ENCODE measurements at regions of chr5 and their contacts with region 1.

Region 1: DNA sequence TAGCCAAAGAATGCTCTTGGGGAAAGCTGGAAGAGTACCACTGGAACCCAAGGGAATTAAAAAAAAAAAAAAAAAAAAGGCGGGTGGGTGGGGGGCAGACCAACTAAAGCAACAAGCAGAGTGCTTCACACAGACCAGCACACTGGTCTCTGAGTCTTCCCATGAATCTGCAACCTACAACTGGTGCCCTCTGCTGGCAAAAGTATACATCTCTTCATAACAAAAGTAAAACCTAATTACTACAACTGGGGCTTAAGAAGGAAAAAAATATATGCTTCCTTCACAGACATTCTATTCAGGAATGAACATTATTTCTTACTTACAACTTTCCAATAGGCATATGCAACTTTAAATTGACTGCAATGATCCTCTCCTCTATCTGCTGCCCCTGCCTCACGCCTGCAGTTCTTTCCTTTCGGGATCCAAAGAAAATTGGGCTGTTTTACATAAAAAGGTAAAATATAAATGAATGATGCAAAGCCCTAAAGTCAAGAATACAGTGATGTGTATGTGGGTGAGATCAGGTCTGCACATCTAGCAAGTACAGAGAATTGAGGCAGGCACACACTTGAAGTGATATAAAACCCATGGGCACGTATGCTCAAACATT is 7.2 kb upstream of the KLHL3 start:
- DNase-seq: peak in 4 of 5 donors; percentile 37 to 66 (median 44)
- H3K4me3 ChIP-seq: no peak overlapping the region
- H3K27ac ChIP-seq: no peak overlapping the region
- H3K4me1 ChIP-seq: no peaks in the 10 kb centered on the region
- H3K27me3 ChIP-seq: no peaks in the 10 kb centered on the region
- CTCF ChIP-seq: peak; percentile 39 to 65 (median 48)
- EP300 ChIP-seq: no peak
- POLR2A ChIP-seq: no peak

Region 2: DNA sequence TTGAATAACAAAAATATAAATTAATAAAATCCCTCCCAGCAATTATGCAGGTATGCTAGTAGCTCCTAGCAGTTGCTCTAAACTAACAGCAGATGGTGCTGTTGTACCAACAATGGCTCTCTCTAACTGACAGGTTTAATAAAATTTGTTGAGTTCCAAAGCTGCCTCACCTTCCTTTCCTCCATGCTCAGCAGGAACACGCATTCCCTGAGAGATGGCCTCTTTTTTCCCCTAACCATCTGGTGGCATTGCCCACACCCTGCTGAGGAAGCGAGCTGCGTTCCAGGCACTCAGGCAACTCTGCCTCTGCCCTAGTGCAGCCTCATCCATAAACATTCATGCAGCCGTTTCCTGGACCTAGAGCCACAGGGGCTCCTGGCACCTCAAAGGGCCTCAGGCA is 113.5 kb before region 1 on chr5:
- intact Hi-C with region 1: loop called in 2 of 4 experiments (anchors 2 to 5 kb)
- DNase-seq: peak in 1 of 5 donors; percentile 33
- H3K4me3 ChIP-seq: no peak overlapping the region
- H3K27ac ChIP-seq: no peak overlapping the region
- H3K4me1 ChIP-seq: peaks cover 8% of the 10 kb centered on the region
- H3K27me3 ChIP-seq: no peaks in the 10 kb centered on the region
- CTCF ChIP-seq: peak; percentile 82 to 92 (median 90)
- EP300 ChIP-seq: no peak
- POLR2A ChIP-seq: no peak

Region 3: GRCh38 chr5:137635521-137635921 is 107.6 kb before region 1 on chr5:
- intact Hi-C with region 1: loop called in 2 of 4 experiments (anchors 2 to 5 kb)
- DNase-seq: no peak
- H3K4me3 ChIP-seq: no peak overlapping the region
- H3K27ac ChIP-seq: peak overlapping the region in 1 of 2 donors; percentile 18
- H3K4me1 ChIP-seq: peaks cover 13% of the 10 kb centered on the region
- H3K27me3 ChIP-seq: no peaks in the 10 kb centered on the region
- CTCF ChIP-seq: no peak
- EP300 ChIP-seq: no peak
- POLR2A ChIP-seq: no peak

Region 4: GRCh38 chr5:137660349-137660817 is 82.8 kb before region 1 on chr5:
- intact Hi-C with region 1: loop called in 3 of 4 experiments (anchors 2 to 5 kb)
- DNase-seq: peak; percentile 52 to 74 (median 62)
- H3K4me3 ChIP-seq: no peak overlapping the region
- H3K27ac ChIP-seq: no peak overlapping the region
- H3K4me1 ChIP-seq: no peaks in the 10 kb centered on the region
- H3K27me3 ChIP-seq: no peaks in the 10 kb centered on the region
- CTCF ChIP-seq: peak; percentile 26 to 64 (median 55)
- EP300 ChIP-seq: no peak
- POLR2A ChIP-seq: no peak

Region 5: GRCh38 chr5:137665678-137666460 is 77.3 kb before region 1 on chr5:
- intact Hi-C with region 1: loop called in 2 of 4 experiments (anchors 2 to 5 kb)
- DNase-seq: no peak
- H3K4me3 ChIP-seq: no peak overlapping the region
- H3K27ac ChIP-seq: peak overlapping the region in 1 of 2 donors; percentile 43
- H3K4me1 ChIP-seq: peaks cover 10% of the 10 kb centered on the region
- H3K27me3 ChIP-seq: no peaks in the 10 kb centered on the region
- CTCF ChIP-seq: no peak
- EP300 ChIP-seq: no peak
- POLR2A ChIP-seq: no peak